Activated CD8-positive, alpha-beta memory T cell treated with anti-CD3 and anti-CD28 coated beads, Interleukin-2, amount 10 ng/mL, durations not matched to agents 7 days and 5 days (primary cell): ENCODE measurements at regions of chr5 and their contacts with region 1.

Region 1: GRCh38 chr5:177454397-177455035 is 7.9 kb downstream of the PRR7 start:
- DNase-seq: peak; percentile 93
- ATAC-seq: peak; percentile 60
- H3K4me3 Mint-ChIP-seq: peak overlapping the region; percentile 78
- H3K27ac Mint-ChIP-seq: no peak overlapping the region
- H3K4me1 Mint-ChIP-seq: peaks cover 18% of the 10 kb centered on the region
- H3K27me3 Mint-ChIP-seq: peaks cover 5% of the 10 kb centered on the region

Region 2: GRCh38 chr5:177317959-177318377 is 136.5 kb before region 1 on chr5:
- CTCF ChIA-PET with region 1: interaction called, 24 read pairs
- DNase-seq: peak; percentile 87
- ATAC-seq: peak; percentile 76
- H3K4me3 Mint-ChIP-seq: no peak overlapping the region
- H3K27ac Mint-ChIP-seq: no peak overlapping the region
- H3K4me1 Mint-ChIP-seq: peaks cover 48% of the 10 kb centered on the region
- H3K27me3 Mint-ChIP-seq: no peaks in the 10 kb centered on the region

Region 3: DNA sequence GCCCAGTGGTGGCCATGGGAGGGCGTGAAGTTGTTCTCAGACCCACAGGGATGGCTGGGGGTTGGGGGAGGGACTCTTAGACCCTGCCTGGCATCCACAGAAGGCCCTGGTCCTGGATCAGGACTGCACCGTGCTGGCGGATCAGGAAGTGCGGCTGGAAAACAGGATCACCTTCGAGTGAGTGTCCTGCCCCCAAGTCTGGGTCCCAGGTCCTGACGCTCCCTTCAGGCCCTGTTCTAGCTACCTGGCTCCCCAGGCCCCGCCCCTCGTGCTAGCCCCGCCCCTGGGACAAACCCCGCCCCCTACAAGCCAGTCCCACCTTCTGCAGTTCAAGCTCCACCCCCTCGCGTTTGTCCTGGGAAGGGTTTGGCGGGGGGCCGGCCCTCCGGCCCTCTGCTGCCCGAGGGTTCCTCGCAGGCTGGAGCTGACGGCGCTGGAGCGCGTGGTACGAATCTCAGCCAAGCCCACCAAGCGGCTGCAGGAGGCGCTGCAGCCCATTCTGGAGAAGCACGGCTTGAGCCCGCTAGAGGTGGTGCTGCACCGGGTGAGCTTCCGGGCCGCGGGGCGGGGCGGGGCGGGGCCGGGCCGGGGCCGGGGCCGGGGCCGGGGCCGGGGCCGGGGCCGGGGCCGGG is 83.9 kb before region 1 on chr5:
- CTCF ChIA-PET with region 1: interaction called, 53 read pairs
- DNase-seq: peak; percentile 77
- ATAC-seq: peak; percentile 83
- H3K4me3 Mint-ChIP-seq: peak overlapping the region; percentile 53
- H3K27ac Mint-ChIP-seq: no peak overlapping the region
- H3K4me1 Mint-ChIP-seq: peaks cover 56% of the 10 kb centered on the region
- H3K27me3 Mint-ChIP-seq: no peaks in the 10 kb centered on the region

Region 4: DNA sequence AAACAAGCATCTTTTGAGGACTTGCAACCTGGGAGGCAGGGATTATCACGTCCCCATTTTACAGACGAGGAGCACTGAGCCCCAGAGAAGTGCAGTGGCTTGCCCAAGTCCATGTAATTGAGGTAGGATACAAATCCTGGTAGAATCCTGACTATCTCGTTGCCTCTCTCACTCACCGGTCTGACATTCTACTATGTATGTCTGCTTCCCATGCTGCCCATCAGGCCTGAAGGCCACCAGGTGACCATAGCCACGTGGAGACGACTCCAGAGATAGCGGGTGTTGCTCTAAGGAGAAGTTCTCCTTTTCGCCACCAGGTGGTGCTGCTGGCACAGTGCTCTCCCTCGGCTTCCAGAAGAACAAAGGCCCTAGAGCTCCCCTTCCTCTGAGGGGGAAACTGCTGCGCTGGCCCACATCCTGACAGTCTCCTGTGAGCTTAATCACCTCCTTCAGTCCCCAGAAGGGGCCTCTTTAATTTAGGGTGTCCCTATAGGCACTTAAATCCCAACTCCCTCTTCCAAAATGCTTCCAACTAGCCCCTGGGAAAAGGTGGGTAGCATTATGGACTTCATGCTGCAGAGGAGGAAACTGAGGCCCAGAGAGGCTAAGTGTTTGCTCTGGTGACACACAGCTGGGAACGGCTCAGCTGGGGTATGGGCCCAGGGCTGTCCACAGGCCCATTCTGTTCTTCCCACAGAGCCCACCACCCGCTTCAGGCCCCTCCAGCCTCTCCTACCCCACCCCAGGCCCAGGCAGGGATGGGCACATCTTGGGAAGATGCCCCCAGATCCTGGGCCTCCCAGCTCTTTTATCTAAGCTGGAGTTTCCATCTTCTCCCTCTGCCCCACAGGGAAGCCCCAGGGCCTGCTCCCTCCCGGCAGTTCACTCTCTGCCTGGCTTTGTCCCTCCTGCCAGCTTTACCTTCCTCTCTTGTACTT is 63.9 kb before region 1 on chr5:
- CTCF ChIA-PET with region 1: interaction called, 249 read pairs
- DNase-seq: peak; percentile 93
- ATAC-seq: peak; percentile 72
- H3K4me3 Mint-ChIP-seq: peak overlapping the region; percentile 37
- H3K27ac Mint-ChIP-seq: peak overlapping the region; percentile 88
- H3K4me1 Mint-ChIP-seq: peaks cover 47% of the 10 kb centered on the region
- H3K27me3 Mint-ChIP-seq: no peaks in the 10 kb centered on the region

Region 5: GRCh38 chr5:177431317-177432142 is 23.0 kb before region 1 on chr5:
- CTCF ChIA-PET with region 1: interaction called, 142 read pairs
- DNase-seq: peak; percentile 93
- ATAC-seq: peak; percentile 60
- H3K4me3 Mint-ChIP-seq: peak overlapping the region; percentile 89
- H3K27ac Mint-ChIP-seq: peak overlapping the region; percentile 94
- H3K4me1 Mint-ChIP-seq: peaks cover 73% of the 10 kb centered on the region
- H3K27me3 Mint-ChIP-seq: no peaks in the 10 kb centered on the region

Region 6: GRCh38 chr5:177473461-177474001 is 19.0 kb after region 1 on chr5 and contains the start of gene DBN1:
- CTCF ChIA-PET with region 1: interaction called, 53 read pairs
- DNase-seq: peak; percentile 59
- ATAC-seq: peak; percentile 35
- H3K4me3 Mint-ChIP-seq: peak within 1 kb of the TSS; percentile 77
- H3K27ac Mint-ChIP-seq: peak within 1 kb of the TSS; percentile 84
- H3K4me1 Mint-ChIP-seq: peaks cover 57% of the 10 kb centered on the region
- H3K27me3 Mint-ChIP-seq: no peaks in the 10 kb centered on the region
- total RNA-seq, gene DBN1: 81.5 to 128 TPM

Region 7: DNA sequence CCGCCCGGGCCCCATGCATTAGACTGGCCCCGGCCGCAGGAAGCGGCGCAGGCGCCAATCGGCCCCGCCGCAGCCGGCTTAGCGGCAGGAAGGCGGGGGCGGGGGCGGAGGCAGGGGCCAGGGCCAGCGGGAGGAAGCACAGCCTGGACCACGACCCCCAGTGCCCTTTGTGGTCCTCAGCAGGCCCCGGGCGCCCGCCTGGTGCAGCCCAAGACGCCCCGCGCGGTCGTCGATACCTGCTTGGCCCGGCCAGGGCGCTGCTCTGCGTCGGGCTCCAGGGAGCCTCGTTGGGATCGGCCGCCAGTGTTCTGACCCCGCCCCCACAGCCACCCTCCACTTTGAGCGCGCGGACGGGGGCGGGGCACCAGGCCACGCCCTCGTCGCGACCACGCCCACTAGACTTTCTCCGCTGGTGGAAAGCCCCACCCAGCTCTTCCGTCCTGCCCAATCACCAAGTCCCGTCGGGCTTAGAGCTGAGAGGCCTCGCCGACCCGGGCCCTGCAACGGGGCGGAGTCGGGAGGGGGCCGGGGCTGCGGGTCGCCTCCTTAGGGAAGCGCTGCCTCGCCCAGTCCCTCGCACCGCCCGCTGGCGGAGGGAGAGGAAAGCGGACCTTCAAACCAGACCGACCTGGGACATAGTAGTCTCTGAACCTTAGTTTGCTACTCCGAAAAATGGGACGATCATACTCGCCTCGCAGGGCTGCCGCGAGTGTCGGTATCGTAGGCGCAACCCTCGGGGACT is 42.9 kb after region 1 on chr5 and contains the start of gene PDLIM7:
- CTCF ChIA-PET with region 1: interaction called, 193 read pairs
- DNase-seq: peak; percentile 96
- ATAC-seq: peak; percentile 90
- H3K4me3 Mint-ChIP-seq: peak within 1 kb of the TSS; percentile 82
- H3K27ac Mint-ChIP-seq: peak within 1 kb of the TSS; percentile 72
- H3K4me1 Mint-ChIP-seq: peaks cover 44% of the 10 kb centered on the region
- H3K27me3 Mint-ChIP-seq: peaks cover 21% of the 10 kb centered on the region
- total RNA-seq, gene PDLIM7: 72.9 to 81.2 TPM

Region 8: GRCh38 chr5:177552839-177553455 is 98.4 kb after region 1 on chr5:
- CTCF ChIA-PET with region 1: no interaction called
- DNase-seq: no peak
- ATAC-seq: no peak
- H3K4me3 Mint-ChIP-seq: peak overlapping the region; percentile 79
- H3K27ac Mint-ChIP-seq: peak overlapping the region; percentile 41
- H3K4me1 Mint-ChIP-seq: peaks cover 41% of the 10 kb centered on the region
- H3K27me3 Mint-ChIP-seq: no peaks in the 10 kb centered on the region